Cardiac septum (tissue), 1 donor: ENCODE measurements at regions of chr14 and their contacts with region 1.

Region 1: GRCh38 chr14:95442633-95443021 is 73.8 kb downstream of the SYNE3 start:
- DNase-seq: peak; percentile 86

Region 2: GRCh38 chr14:95527387-95528002 is 84.9 kb after region 1 on chr14:
- intact Hi-C with region 1: loop called (anchors 1 kb)
- DNase-seq: no peak

Region 3: GRCh38 chr14:95759941-95760340 is 317.3 kb after region 1 on chr14:
- intact Hi-C with region 1: loop called (anchors 10 kb)
- DNase-seq: no peak

Region 4: GRCh38 chr14:95993768-95994592 is 551.4 kb after region 1 on chr14:
- intact Hi-C with region 1: loop called (anchors 5 kb)
- DNase-seq: no peak